Activated CD4-positive, alpha-beta T cell treated with anti-CD3 and anti-CD28 coated beads for 36 hours (primary cell): ENCODE measurements at regions of chr11 and their contacts with region 1.

Region 1: GRCh38 chr11:112280268-112281126 is 19.8 kb upstream of the PLET1 start:
- DNase-seq: peak; percentile 77
- ATAC-seq: peak; percentile 92
- H3K4me3 Mint-ChIP-seq: peak overlapping the region; percentile 82
- H3K27ac Mint-ChIP-seq: peak overlapping the region; percentile 76
- H3K4me1 Mint-ChIP-seq: peaks cover 14% of the 10 kb centered on the region
- H3K27me3 Mint-ChIP-seq: no peaks in the 10 kb centered on the region

Region 2: GRCh38 chr11:112113539-112114457 is 166.7 kb before region 1 on chr11:
- CTCF ChIA-PET with region 1: interaction called, 9 read pairs
- POLR2A ChIA-PET with region 1: no interaction called
- intact Hi-C with region 1: loop called (anchors 1 to 2 kb)
- DNase-seq: no peak
- ATAC-seq: peak; percentile 68
- H3K4me3 Mint-ChIP-seq: no peak overlapping the region
- H3K27ac Mint-ChIP-seq: no peak overlapping the region
- H3K4me1 Mint-ChIP-seq: peaks cover 7% of the 10 kb centered on the region
- H3K27me3 Mint-ChIP-seq: no peaks in the 10 kb centered on the region

Region 3: DNA sequence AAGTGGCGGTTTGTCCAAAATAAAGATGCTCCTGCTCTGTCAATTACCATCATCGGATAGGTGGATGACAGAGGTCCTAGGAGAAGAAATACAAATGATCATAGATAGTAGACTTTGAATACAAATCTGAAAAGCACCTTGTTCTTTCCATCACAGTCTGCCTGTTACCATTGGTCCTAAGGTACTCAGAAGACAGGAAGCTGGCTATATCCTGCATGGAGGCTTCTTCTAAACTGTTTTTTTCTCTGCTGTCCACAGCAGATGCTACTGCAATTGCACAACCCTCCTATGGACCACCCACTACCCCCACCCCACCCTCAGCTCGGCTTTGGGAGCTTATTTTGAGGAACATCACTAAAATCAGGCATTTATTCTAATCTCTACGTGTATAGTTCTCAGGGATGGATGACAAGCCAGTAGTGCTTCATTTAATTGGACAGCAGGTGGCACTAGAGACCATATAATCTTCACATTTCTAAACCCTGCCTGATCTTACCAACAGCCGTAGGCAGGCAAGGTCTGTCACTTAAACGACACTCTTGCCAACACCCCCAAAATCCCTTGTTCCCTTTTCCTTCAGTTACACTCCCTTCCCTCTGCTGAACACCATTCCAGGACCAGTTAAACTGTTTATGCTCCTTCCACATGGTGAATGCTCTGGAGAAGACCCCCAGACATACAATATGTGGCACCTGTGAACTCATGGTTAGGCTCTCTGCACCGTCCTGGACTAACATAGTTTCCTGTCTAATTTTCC is 60.8 kb before region 1 on chr11:
- CTCF ChIA-PET with region 1: interaction called, 191 read pairs
- POLR2A ChIA-PET with region 1: no interaction called
- intact Hi-C with region 1: loop called (anchors 1 kb)
- DNase-seq: peak; percentile 45
- ATAC-seq: peak; percentile 99
- H3K4me3 Mint-ChIP-seq: no peak overlapping the region
- H3K27ac Mint-ChIP-seq: no peak overlapping the region
- H3K4me1 Mint-ChIP-seq: no peaks in the 10 kb centered on the region
- H3K27me3 Mint-ChIP-seq: no peaks in the 10 kb centered on the region

Region 4: GRCh38 chr11:112453601-112454577 is 173.4 kb after region 1 on chr11:
- CTCF ChIA-PET with region 1: interaction called, 11 read pairs
- POLR2A ChIA-PET with region 1: no interaction called
- intact Hi-C with region 1: no loop called
- DNase-seq: peak; percentile 75
- ATAC-seq: no peak
- H3K4me3 Mint-ChIP-seq: no peak overlapping the region
- H3K27ac Mint-ChIP-seq: no peak overlapping the region
- H3K4me1 Mint-ChIP-seq: no peaks in the 10 kb centered on the region
- H3K27me3 Mint-ChIP-seq: no peaks in the 10 kb centered on the region

Region 5: DNA sequence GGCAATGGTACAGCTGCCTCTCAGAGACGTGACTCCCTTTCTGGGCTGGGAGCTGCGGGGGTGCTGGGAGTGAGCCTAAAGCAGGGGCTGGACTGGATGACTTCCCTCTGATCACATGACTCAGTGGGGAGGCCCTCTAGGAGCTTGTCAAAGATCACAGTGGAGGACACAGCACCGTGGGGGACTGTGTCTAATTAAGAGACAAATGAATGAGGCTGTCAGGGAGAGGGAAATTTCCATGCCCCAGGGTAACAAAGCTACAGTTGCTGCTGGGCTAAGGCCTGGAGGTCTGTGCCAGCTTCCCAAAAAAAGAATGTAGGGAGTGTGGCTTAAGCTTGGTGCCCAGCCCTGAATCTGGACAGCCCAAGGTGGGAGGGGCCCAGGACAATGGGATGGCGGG is 243.0 kb after region 1 on chr11:
- CTCF ChIA-PET with region 1: interaction called, 4 read pairs
- POLR2A ChIA-PET with region 1: interaction called, 11 read pairs
- intact Hi-C with region 1: no loop called
- DNase-seq: no peak
- ATAC-seq: no peak
- H3K4me3 Mint-ChIP-seq: no peak overlapping the region
- H3K27ac Mint-ChIP-seq: no peak overlapping the region
- H3K4me1 Mint-ChIP-seq: peaks cover 22% of the 10 kb centered on the region
- H3K27me3 Mint-ChIP-seq: peaks cover 2% of the 10 kb centered on the region

Region 6: DNA sequence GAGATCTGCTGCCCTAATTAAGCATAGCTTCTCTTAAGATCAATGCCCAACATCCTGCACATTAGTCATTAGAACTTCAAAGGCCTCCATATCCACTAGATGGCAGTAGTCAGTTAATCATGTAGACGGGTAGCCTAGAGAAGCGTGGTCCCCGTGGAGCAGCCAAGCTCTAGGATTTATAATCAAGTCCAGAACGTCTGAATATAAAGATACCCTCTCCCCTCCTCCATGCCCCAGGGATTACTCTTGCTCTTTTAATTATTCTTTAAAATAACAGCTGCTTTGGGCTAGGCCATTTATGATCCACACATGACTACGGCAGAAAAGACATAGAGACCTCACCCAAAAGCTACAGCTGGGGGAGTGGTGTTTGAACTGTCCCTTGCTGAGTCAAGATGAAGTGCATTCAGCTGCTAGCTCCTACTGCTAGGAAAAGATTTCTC is 307.8 kb after region 1 on chr11:
- CTCF ChIA-PET with region 1: interaction called, 11 read pairs
- POLR2A ChIA-PET with region 1: no interaction called
- intact Hi-C with region 1: no loop called
- DNase-seq: peak; percentile 64
- ATAC-seq: peak; percentile 94
- H3K4me3 Mint-ChIP-seq: no peak overlapping the region
- H3K27ac Mint-ChIP-seq: no peak overlapping the region
- H3K4me1 Mint-ChIP-seq: peaks cover 1% of the 10 kb centered on the region
- H3K27me3 Mint-ChIP-seq: no peaks in the 10 kb centered on the region